Psoas muscle (tissue), 8 donors: ENCODE measurements at regions of chr3 and their contacts with region 1.

Region 1: GRCh38 chr3:135965506-135966270 is at the start of gene PPP2R3A:
- DNase-seq: peak; percentile 86 to 93
- ATAC-seq: peak; percentile 92 to 97 (median 96)
- H3K4me3 ChIP-seq: peak within 1 kb of the TSS; percentile 82
- H3K27ac ChIP-seq: peak within 1 kb of the TSS; percentile 92
- H3K4me1 ChIP-seq: peaks cover 38% of the 10 kb centered on the region
- H3K27me3 ChIP-seq: no peaks in the 10 kb centered on the region
- CTCF ChIP-seq: no peak
- total RNA-seq, gene PPP2R3A: 45.5 to 134 (median 52.6) TPM

Region 2: GRCh38 chr3:135918580-135918962 is 47.1 kb before region 1 on chr3:
- intact Hi-C with region 1: loop called (anchors 5 kb)
- DNase-seq: no peak
- ATAC-seq: peak; percentile 77 to 92 (median 82)
- H3K4me3 ChIP-seq: no peak overlapping the region
- H3K27ac ChIP-seq: no peak overlapping the region
- H3K4me1 ChIP-seq: peaks cover 11% of the 10 kb centered on the region
- H3K27me3 ChIP-seq: no peaks in the 10 kb centered on the region
- CTCF ChIP-seq: peak; percentile 69

Region 3: GRCh38 chr3:136022529-136023263 is 57.0 kb after region 1 on chr3:
- intact Hi-C with region 1: loop called (anchors 2 to 5 kb)
- DNase-seq: no peak
- ATAC-seq: peak; percentile 72 to 81 (median 78)
- H3K4me3 ChIP-seq: peak overlapping the region; percentile 64
- H3K27ac ChIP-seq: peak overlapping the region; percentile 95
- H3K4me1 ChIP-seq: peaks cover 44% of the 10 kb centered on the region
- H3K27me3 ChIP-seq: no peaks in the 10 kb centered on the region
- CTCF ChIP-seq: no peak

Region 4: GRCh38 chr3:136036306-136036705 is 70.6 kb after region 1 on chr3:
- intact Hi-C with region 1: loop called (anchors 5 kb)
- DNase-seq: no peak
- ATAC-seq: peak in 2 of 4 donors; percentile 22 to 42
- H3K4me3 ChIP-seq: no peak overlapping the region
- H3K27ac ChIP-seq: no peak overlapping the region
- H3K4me1 ChIP-seq: peaks cover 5% of the 10 kb centered on the region
- H3K27me3 ChIP-seq: no peaks in the 10 kb centered on the region
- CTCF ChIP-seq: no peak